ENCODE measurements at regions of chr2 and their contacts with region 1.

Region 1: DNA sequence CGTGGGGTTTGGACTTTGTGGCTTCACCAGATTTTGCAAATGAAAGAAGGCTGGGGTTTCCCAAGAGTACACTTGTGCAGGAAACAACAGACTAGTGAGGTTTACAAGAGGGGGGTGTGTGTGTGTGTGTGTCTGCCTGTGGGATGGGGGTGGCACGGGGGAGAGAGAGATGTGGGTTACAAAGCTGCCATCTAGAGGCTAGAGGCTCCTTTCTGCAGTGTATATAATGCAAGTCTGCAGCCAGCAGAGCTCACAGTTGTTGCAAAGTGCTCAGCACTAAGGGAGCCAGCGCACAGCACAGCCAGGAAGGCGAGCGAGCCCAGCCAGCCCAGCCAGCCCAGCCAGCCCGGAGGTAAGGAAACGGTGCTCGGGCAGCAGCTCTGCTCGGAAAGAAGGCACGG is at the start of gene ACKR3:
- DNase-seq: peak; percentile 45 to 93 (median 78)

Region 2: GRCh38 chr2:236512902-236513435 is 56.6 kb before region 1 on chr2:
- intact Hi-C with region 1: loop called (anchors 5 kb)
- DNase-seq: peak; percentile 34 to 81 (median 64)

Region 3: GRCh38 chr2:237026981-237027711 is 457.6 kb after region 1 on chr2:
- intact Hi-C with region 1: no loop called
- DNase-seq: peak; percentile 25 to 81 (median 59)